ENCODE measurements at regions of chr12 and their contacts with region 1.

Region 1: DNA sequence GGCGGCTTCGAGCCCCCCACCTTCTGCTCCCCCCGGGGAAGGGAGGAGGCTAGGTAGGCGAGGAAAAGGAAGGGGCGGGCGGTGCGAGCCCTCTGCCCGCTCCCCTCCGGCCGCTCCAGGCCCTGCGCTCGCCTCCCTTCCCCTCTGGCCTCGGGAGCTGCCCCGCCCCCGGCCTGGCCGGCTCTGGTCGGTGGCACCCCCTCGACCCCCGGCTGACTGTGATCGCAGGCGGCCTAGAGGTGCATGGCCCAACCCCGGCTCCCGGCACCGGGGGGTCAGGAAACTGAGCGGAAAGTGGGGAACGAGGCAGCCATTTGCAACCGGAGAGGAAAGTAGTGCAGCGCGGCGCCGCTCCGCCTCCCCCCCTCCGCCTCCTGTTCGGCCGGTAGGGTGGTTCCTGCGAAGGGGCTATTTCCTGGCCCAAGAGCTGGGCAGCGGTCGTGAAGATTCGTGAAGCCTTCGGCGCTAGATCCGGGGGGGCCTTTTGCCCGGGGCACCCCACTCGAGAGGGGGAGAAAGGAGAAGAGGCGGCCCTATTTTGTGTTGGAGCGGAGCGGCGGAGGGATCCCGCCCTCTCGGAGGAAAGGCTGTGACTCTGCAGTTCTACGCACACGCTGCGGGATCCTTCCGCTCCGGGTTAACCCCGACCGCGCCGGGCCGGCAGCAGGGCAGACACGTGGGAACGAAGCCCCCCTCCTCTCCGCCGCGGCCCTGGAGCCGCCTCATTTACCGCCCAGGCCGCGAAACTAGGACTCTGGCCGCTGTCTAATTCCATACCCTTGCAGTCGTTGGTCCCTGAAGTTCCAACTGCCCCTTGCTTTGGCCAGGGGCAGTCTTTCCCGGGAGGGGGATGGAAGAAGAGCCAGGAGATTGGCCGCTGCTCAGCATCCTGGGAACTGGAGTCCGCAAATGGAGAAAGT is at the start of gene KMT2D:
- DNase-seq: peak; percentile 96
- H3K4me3 Mint-ChIP-seq: peak within 1 kb of the TSS; percentile 98
- H3K27ac Mint-ChIP-seq: peak within 1 kb of the TSS; percentile 95
- H3K4me1 Mint-ChIP-seq: peaks cover 46% of the 10 kb centered on the region
- H3K27me3 Mint-ChIP-seq: no peaks in the 10 kb centered on the region
- total RNA-seq, gene KMT2D: 101 TPM in 2 replicates

Region 2: DNA sequence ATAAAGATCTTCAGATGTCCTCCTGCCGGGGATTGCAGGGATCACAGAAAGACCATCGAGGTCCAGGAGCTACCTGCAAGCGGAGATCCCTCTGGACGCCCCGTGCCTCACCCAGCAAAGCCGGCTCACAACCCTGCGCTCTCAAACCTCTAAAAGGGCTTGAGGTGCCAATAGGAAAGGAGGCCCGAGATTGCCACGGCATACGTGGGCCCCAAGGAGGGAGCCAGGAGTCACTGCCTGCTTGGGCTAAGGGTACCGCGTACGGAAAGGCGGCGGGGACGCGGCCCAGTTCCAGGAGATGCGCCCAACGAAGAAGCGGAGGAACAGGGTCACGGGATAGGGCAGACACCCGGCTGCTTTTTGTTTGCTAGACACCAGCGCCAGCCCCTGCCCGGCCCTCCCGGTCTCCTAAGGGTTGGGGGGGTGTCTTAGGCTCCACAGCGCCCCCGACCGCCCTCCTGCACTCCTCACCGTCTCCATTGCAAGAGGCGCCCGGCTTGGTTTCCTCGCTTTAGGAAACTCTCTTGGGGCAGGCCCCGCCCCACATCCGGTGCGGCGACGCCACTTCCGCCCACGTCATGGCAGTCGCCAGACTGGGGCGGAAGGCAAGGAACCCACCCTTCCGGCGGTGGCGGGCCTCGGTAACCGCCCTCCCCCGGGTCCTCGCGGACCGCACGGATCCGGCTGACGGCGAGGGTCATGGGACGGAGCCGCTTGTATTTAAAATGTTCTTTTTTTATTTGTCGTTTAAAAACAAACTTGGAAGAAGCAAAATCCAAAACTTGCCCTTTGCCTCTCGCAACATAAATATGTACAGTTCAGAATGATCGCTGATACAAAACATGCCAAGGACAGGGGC is 42.0 kb before region 1 on chr12 and contains the start of gene PRKAG1:
- intact Hi-C with region 1: loop called (anchors 1 kb)
- DNase-seq: peak; percentile 99
- H3K4me3 Mint-ChIP-seq: peak within 1 kb of the TSS; percentile 90
- H3K27ac Mint-ChIP-seq: peak within 1 kb of the TSS; percentile 91
- H3K4me1 Mint-ChIP-seq: peaks cover 25% of the 10 kb centered on the region
- H3K27me3 Mint-ChIP-seq: no peaks in the 10 kb centered on the region
- total RNA-seq, gene PRKAG1: 75.3 and 89.8 TPM in 2 replicates

Region 3: DNA sequence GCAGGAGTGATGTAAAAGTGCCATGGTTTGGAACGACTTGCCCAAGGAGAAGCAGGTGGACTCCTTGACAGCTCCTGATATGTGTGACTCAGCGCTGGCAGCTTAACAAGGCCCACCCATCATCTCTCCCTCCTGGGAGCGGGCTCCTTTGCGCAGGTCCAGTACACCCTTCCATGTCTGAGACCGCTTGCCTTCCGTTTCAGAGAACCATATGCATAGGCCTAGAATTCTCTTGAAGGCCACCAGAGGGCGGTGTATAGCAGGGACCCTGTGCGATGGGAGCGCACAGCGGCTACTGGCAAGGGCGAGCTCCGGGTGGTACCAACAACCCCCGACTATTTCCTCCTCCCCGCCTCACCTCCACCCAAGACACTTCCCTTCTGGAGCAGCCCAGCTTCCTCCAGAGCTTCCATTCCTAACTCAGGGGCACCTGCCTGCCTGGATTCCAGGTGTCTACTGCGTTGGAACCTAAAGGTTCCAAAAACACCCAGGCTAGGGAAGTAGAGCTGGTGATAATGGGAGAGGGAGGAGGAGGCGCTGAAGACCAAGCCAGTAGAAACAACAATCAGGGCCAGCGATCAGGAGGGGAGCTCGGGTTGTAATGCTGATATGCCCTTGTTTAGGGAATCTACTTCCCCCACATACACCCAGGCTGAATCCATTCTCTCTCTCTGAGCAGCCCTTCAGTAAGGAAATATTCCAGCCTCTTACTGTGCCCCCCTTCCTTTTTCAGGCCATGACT is 27.9 kb after region 1 on chr12:
- intact Hi-C with region 1: loop called (anchors 1 kb)
- DNase-seq: peak; percentile 92
- H3K4me3 Mint-ChIP-seq: peak overlapping the region; percentile 39
- H3K27ac Mint-ChIP-seq: no peak overlapping the region
- H3K4me1 Mint-ChIP-seq: peaks cover 40% of the 10 kb centered on the region
- H3K27me3 Mint-ChIP-seq: peaks cover 42% of the 10 kb centered on the region

Region 4: DNA sequence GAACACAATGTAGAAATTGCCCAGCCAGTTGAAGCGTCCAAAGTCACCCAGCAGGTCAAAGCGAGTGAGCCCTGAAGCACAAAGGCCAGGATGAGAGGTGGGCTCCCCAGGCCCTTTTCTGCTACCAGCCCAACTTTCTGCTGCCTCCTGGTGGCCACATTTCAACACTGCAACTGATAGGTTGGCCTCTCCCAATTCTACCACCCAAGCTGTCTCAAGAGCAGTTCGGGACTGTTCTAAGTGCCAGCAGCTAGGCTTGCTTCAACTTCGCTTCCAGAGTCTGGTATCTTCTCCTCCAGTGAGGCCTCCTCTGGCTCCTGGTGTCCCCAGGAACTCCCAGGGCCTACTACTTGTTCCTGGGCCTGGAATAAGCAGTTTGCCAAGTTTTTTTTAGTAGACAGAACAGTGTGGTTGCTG is 37.5 kb after region 1 on chr12:
- intact Hi-C with region 1: loop called (anchors 1 kb)
- DNase-seq: peak; percentile 90
- H3K4me3 Mint-ChIP-seq: no peak overlapping the region
- H3K27ac Mint-ChIP-seq: no peak overlapping the region
- H3K4me1 Mint-ChIP-seq: peaks cover 11% of the 10 kb centered on the region
- H3K27me3 Mint-ChIP-seq: peaks cover 22% of the 10 kb centered on the region

Region 5: GRCh38 chr12:49188914-49189367 is 128.4 kb after region 1 on chr12 and contains the start of gene TUBA1A:
- intact Hi-C with region 1: loop called (anchors 5 kb)
- DNase-seq: peak; percentile 98
- H3K4me3 Mint-ChIP-seq: peak within 1 kb of the TSS; percentile 93
- H3K27ac Mint-ChIP-seq: peak within 1 kb of the TSS; percentile 99
- H3K4me1 Mint-ChIP-seq: peaks cover 11% of the 10 kb centered on the region
- H3K27me3 Mint-ChIP-seq: peaks cover 9% of the 10 kb centered on the region
- total RNA-seq, gene TUBA1A: 45.9 and 46.8 TPM in 2 replicates

Region 6: GRCh38 chr12:49232940-49233841 is 172.7 kb after region 1 on chr12:
- intact Hi-C with region 1: loop called (anchors 1 kb)
- DNase-seq: no peak
- H3K4me3 Mint-ChIP-seq: peak overlapping the region; percentile 88
- H3K27ac Mint-ChIP-seq: peak overlapping the region; percentile 77
- H3K4me1 Mint-ChIP-seq: peaks cover 14% of the 10 kb centered on the region
- H3K27me3 Mint-ChIP-seq: peaks cover 1% of the 10 kb centered on the region

Region 7: DNA sequence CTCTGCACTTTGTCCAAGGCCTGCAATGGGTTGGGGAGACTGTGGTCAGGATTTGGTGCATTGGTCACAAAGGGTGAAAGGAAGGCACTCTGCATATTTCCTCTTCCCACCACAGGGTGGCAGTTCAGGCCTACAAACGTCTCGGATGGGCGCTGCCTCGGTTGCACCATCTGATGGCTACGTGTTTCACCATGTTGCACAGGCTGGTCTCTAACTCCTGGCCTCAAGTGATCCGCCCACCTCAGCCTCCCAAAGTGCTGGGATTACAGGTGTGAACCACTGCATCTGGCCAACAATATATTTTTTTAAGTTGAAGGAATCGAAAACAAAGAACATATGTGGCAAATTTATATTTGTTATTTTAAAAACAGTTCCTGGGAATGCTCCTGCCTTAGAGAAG is 715.9 kb after region 1 on chr12:
- intact Hi-C with region 1: no loop called
- DNase-seq: peak; percentile 87
- H3K4me3 Mint-ChIP-seq: no peak overlapping the region
- H3K27ac Mint-ChIP-seq: no peak overlapping the region
- H3K4me1 Mint-ChIP-seq: peaks cover 11% of the 10 kb centered on the region
- H3K27me3 Mint-ChIP-seq: peaks cover 20% of the 10 kb centered on the region